ENCODE measurements at regions of chrX and their contacts with region 1.

Region 1: GRCh38 chrX:13482746-13483145 is 86.7 kb upstream of the EGFL6 start:
- DNase-seq: no peak
- H3K4me3 ChIP-seq: no peak overlapping the region
- H3K4me1 ChIP-seq: peaks cover 7% of the 10 kb centered on the region
- H3K27me3 ChIP-seq: no peaks in the 10 kb centered on the region

Region 2: DNA sequence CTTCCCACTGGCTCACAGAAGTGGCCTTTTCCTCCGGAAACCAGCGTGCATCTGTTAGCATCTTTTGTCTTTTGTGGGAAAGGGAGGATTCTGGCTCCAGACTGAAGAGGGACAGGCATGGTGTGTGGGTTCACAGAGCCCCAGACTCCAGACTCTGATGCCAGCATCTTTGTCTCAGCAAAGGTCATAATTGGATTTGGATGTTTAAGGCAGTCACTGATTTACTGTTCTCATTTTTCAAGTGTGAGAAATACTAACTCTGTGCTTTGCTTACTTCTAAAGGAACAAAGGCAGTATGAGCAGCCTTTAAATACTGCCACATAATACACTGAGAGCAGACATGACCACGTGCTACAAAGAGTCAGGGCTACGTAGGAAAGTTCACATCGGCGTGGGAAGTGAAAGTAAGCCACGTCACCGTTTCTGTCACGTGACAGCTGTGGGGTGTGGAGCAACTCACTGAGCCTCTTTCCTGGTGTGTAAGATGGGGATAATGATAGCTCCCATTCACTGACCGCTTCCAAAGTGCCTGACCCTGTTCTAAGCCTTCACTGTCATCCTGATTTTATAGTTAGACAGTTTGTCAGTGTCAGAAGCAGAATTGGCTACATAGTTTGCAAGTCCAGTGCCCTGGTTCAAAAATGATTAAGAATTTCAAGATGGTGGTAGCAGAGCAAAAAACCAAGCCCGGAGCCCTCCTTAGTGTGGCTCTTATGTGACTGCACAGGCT is 532.7 kb before region 1 on chrX:
- in situ Hi-C with region 1: loop called (anchors 5 kb)
- DNase-seq: no peak
- H3K4me3 ChIP-seq: no peak overlapping the region
- H3K4me1 ChIP-seq: peaks cover 10% of the 10 kb centered on the region
- H3K27me3 ChIP-seq: no peaks in the 10 kb centered on the region

Region 3: GRCh38 chrX:13658602-13659001 is 175.9 kb after region 1 on chrX:
- in situ Hi-C with region 1: no loop called
- DNase-seq: peak; percentile 26 to 46
- H3K4me3 ChIP-seq: no peak overlapping the region
- H3K4me1 ChIP-seq: peaks cover 5% of the 10 kb centered on the region
- H3K27me3 ChIP-seq: no peaks in the 10 kb centered on the region

Region 4: DNA sequence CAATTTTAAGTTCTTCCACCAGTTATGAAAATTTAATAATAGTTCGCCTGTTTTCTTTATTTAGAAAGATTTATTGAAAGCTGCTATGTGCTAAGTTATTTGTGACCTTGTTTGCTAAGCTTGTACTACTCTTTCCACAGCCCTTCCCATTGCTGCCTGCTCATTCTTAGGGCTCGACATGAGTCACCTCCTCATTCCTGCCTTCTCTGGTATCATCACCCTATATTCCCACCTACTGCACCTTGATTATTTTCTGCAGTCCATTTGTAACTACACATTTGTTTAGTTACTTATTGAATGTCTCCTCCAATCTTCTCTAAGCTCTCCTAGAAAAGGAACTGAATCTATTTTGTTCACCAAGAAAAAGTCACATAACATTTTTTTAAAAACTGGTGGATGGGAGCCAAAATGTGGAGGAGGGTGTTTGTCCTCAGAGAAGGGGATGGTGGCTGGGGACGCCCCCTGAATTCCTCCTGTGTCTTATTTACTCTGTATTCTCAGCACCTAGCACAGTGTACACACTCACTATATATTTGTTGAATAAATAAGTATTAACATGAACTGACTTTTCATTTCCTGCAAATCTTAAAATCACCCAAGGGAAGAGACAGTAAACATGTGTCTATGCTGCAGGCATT is 202.5 kb after region 1 on chrX:
- in situ Hi-C with region 1: no loop called
- DNase-seq: no peak
- H3K4me3 ChIP-seq: no peak overlapping the region
- H3K4me1 ChIP-seq: peaks cover 3% of the 10 kb centered on the region
- H3K27me3 ChIP-seq: no peaks in the 10 kb centered on the region

Measured in HAP-1 (cell line).